ENCODE measurements at regions of chr1 and their contacts with region 1.

Region 1: DNA sequence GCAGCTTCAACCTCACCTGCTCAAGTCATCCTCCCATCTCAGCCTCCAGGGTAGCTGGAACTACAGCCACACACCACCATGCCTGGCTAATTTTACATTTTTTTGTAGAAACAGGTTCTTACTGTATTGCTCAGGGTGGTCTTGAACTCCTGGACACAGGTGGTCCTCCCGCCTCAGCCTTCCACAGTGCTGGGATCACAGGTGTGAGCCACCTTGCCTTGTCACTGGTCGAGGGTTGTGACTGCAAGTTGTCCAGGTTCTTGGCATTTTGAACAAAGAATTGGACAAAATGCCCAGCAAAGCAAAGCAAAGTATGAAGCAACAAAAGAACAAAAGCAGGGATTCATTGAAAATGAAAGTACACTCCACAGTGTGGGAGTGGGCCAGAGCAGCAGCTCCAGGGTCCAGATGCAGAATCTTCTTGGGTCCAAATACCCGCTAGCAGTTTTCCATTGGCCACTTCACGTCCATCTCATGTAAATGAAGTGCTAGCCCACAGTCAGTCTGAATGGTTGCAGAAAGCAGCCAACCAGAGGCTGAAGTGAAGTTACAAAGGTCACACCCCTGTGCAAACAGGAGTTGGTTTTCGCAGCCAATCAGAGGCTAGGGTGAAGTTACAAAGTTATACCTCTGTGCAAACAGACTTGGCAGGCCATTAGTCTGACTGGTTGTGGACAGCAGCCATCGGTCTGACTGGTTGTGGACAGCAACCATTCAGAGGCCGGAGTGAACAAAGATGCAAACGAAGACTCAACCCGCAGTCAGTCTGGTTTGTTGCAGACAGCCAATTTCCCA is 109.5 kb upstream of the KIF26B start:
- DNase-seq: no peak
- ATAC-seq: no peak
- H3K4me3 ChIP-seq: no peak overlapping the region
- H3K4me3 Mint-ChIP-seq: no peak overlapping the region
- H3K27ac ChIP-seq: no peak overlapping the region
- H3K27ac Mint-ChIP-seq: no peak overlapping the region
- H3K4me1 ChIP-seq: no peaks in the 10 kb centered on the region
- H3K4me1 Mint-ChIP-seq: peaks cover 2% of the 10 kb centered on the region
- H3K27me3 ChIP-seq: no peaks in the 10 kb centered on the region
- H3K27me3 Mint-ChIP-seq: no peaks in the 10 kb centered on the region
- CTCF ChIP-seq: no peak

Region 2: GRCh38 chr1:244599937-244600350 is 445.3 kb before region 1 on chr1:
- CTCF ChIA-PET with region 1: interaction called, 56 read pairs
- POLR2A ChIA-PET with region 1: no interaction called
- intact Hi-C with region 1: loop called (anchors 1 kb)
- DNase-seq: peak in 5 of 9 experiments; percentile 6 to 38 (median 24)
- ATAC-seq: peak; percentile 87
- H3K4me3 ChIP-seq: no peak overlapping the region
- H3K4me3 Mint-ChIP-seq: no peak overlapping the region
- H3K27ac ChIP-seq: no peak overlapping the region
- H3K27ac Mint-ChIP-seq: no peak overlapping the region
- H3K4me1 ChIP-seq: no peaks in the 10 kb centered on the region
- H3K4me1 Mint-ChIP-seq: no peaks in the 10 kb centered on the region
- H3K27me3 ChIP-seq: no peaks in the 10 kb centered on the region
- H3K27me3 Mint-ChIP-seq: no peaks in the 10 kb centered on the region
- CTCF ChIP-seq: no peak

Region 3: GRCh38 chr1:244815600-244816099 is 229.6 kb before region 1 on chr1:
- CTCF ChIA-PET with region 1: interaction called, 13 read pairs
- POLR2A ChIA-PET with region 1: no interaction called
- intact Hi-C with region 1: no loop called
- DNase-seq: no peak
- ATAC-seq: no peak
- H3K4me3 ChIP-seq: no peak overlapping the region
- H3K4me3 Mint-ChIP-seq: peak overlapping the region; percentile 15
- H3K27ac ChIP-seq: no peak overlapping the region
- H3K27ac Mint-ChIP-seq: no peak overlapping the region
- H3K4me1 ChIP-seq: no peaks in the 10 kb centered on the region
- H3K4me1 Mint-ChIP-seq: peaks cover 4% of the 10 kb centered on the region
- H3K27me3 ChIP-seq: peaks cover 0 to 4% of the 10 kb centered on the region in 2 experiments
- H3K27me3 Mint-ChIP-seq: peaks cover 12% of the 10 kb centered on the region
- CTCF ChIP-seq: no peak

Region 4: GRCh38 chr1:244918421-244919319 is 126.6 kb before region 1 on chr1:
- CTCF ChIA-PET with region 1: no interaction called
- POLR2A ChIA-PET with region 1: no interaction called
- intact Hi-C with region 1: loop called in 1 of 2 experiments (anchors 5 kb)
- DNase-seq: peak; percentile 36 to 91 (median 68)
- ATAC-seq: peak; percentile 96
- H3K4me3 ChIP-seq: peak overlapping the region; percentile 55
- H3K4me3 Mint-ChIP-seq: peak overlapping the region; percentile 86
- H3K27ac ChIP-seq: peak overlapping the region in 1 of 2 experiments; percentile 33
- H3K27ac Mint-ChIP-seq: peak overlapping the region; percentile 64
- H3K4me1 ChIP-seq: peaks cover 6% of the 10 kb centered on the region
- H3K4me1 Mint-ChIP-seq: peaks cover 11% of the 10 kb centered on the region
- H3K27me3 ChIP-seq: no peaks in the 10 kb centered on the region
- H3K27me3 Mint-ChIP-seq: no peaks in the 10 kb centered on the region
- CTCF ChIP-seq: no peak

Region 5: GRCh38 chr1:245019910-245020486 is 25.3 kb before region 1 on chr1:
- CTCF ChIA-PET with region 1: interaction called, 10 read pairs
- POLR2A ChIA-PET with region 1: no interaction called
- intact Hi-C with region 1: no loop called
- DNase-seq: no peak
- ATAC-seq: no peak
- H3K4me3 ChIP-seq: no peak overlapping the region
- H3K4me3 Mint-ChIP-seq: no peak overlapping the region
- H3K27ac ChIP-seq: no peak overlapping the region
- H3K27ac Mint-ChIP-seq: no peak overlapping the region
- H3K4me1 ChIP-seq: no peaks in the 10 kb centered on the region
- H3K4me1 Mint-ChIP-seq: peaks cover 2% of the 10 kb centered on the region
- H3K27me3 ChIP-seq: no peaks in the 10 kb centered on the region
- H3K27me3 Mint-ChIP-seq: no peaks in the 10 kb centered on the region
- CTCF ChIP-seq: no peak

Region 6: GRCh38 chr1:245060684-245061374 is 15.5 kb after region 1 on chr1:
- CTCF ChIA-PET with region 1: interaction called, 21 read pairs
- POLR2A ChIA-PET with region 1: no interaction called
- intact Hi-C with region 1: no loop called
- DNase-seq: no peak
- ATAC-seq: no peak
- H3K4me3 ChIP-seq: no peak overlapping the region
- H3K4me3 Mint-ChIP-seq: no peak overlapping the region
- H3K27ac ChIP-seq: no peak overlapping the region
- H3K27ac Mint-ChIP-seq: no peak overlapping the region
- H3K4me1 ChIP-seq: no peaks in the 10 kb centered on the region
- H3K4me1 Mint-ChIP-seq: no peaks in the 10 kb centered on the region
- H3K27me3 ChIP-seq: peaks cover 0 to 2% of the 10 kb centered on the region in 2 experiments
- H3K27me3 Mint-ChIP-seq: no peaks in the 10 kb centered on the region
- CTCF ChIP-seq: no peak

Measured in CD8-positive, alpha-beta T cell (primary cell).